ENCODE measurements at regions of chr17 and their contacts with region 1.

Region 1: GRCh38 chr17:47304031-47304585 is 19.6 kb upstream of the EFCAB13 start:
- DNase-seq: no peak
- H3K4me3 Mint-ChIP-seq: no peak overlapping the region
- H3K27ac Mint-ChIP-seq: no peak overlapping the region
- H3K4me1 Mint-ChIP-seq: peaks cover 25% of the 10 kb centered on the region
- H3K27me3 Mint-ChIP-seq: no peaks in the 10 kb centered on the region

Region 2: GRCh38 chr17:47229535-47230443 is 74.3 kb before region 1 on chr17:
- intact Hi-C with region 1: loop called (anchors 5 kb)
- DNase-seq: peak; percentile 62
- H3K4me3 Mint-ChIP-seq: peak overlapping the region; percentile 46
- H3K27ac Mint-ChIP-seq: no peak overlapping the region
- H3K4me1 Mint-ChIP-seq: peaks cover 17% of the 10 kb centered on the region
- H3K27me3 Mint-ChIP-seq: peaks cover 23% of the 10 kb centered on the region

Region 3: GRCh38 chr17:47257651-47258339 is 46.3 kb before region 1 on chr17:
- intact Hi-C with region 1: loop called (anchors 2 kb)
- DNase-seq: no peak
- H3K4me3 Mint-ChIP-seq: no peak overlapping the region
- H3K27ac Mint-ChIP-seq: no peak overlapping the region
- H3K4me1 Mint-ChIP-seq: peaks cover 23% of the 10 kb centered on the region
- H3K27me3 Mint-ChIP-seq: peaks cover 57% of the 10 kb centered on the region